Mammary epithelial cell (primary cell): ENCODE measurements at regions of chr11 and their contacts with region 1.

Region 1: GRCh38 chr11:112613051-112613972 is 347.9 kb upstream of the NCAM1 start:
- DNase-seq: peak; percentile 95
- H3K4me3 ChIP-seq: no peak overlapping the region
- H3K27ac ChIP-seq: peak overlapping the region; percentile 67
- H3K4me1 ChIP-seq: peaks cover 57% of the 10 kb centered on the region
- H3K27me3 ChIP-seq: no peaks in the 10 kb centered on the region
- CTCF ChIP-seq: no peak

Region 2: DNA sequence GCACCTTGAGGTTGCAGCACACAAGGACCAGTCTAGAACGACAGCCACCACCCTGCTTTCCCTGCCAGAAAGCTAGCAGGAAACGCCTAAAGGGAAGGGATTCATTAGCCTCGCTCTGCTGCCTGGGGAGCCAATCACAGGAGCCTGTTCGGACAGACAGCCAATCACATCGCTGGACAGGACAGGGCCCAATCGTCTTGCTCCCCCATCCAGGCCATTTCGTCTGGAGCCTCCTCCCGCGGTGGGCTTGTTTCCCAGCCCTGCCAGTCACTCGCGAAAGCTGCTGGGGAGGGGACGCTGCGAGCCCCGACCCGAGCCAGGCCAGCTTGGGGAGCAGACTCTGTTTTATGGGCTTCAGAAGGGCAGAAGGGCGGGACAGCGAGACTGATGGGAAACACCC is 268.1 kb after region 1 on chr11:
- CTCF ChIA-PET with region 1: no interaction called
- dilution Hi-C with region 1: no loop called
- in situ Hi-C with region 1: no loop called
- intact Hi-C with region 1: no loop called
- DNase-seq: peak; percentile 66
- H3K4me3 ChIP-seq: peak overlapping the region in 2 of 3 experiments; percentile 22 to 30
- H3K27ac ChIP-seq: no peak overlapping the region
- H3K4me1 ChIP-seq: no peaks in the 10 kb centered on the region
- H3K27me3 ChIP-seq: no peaks in the 10 kb centered on the region
- CTCF ChIP-seq: no peak

Region 3: GRCh38 chr11:113059548-113059947 is 446.2 kb after region 1 on chr11:
- CTCF ChIA-PET with region 1: no interaction called
- dilution Hi-C with region 1: no loop called
- in situ Hi-C with region 1: no loop called
- intact Hi-C with region 1: no loop called
- DNase-seq: no peak
- H3K4me3 ChIP-seq: no peak overlapping the region
- H3K27ac ChIP-seq: no peak overlapping the region
- H3K4me1 ChIP-seq: no peaks in the 10 kb centered on the region
- H3K27me3 ChIP-seq: peaks cover 2% of the 10 kb centered on the region
- CTCF ChIP-seq: no peak

Region 4: DNA sequence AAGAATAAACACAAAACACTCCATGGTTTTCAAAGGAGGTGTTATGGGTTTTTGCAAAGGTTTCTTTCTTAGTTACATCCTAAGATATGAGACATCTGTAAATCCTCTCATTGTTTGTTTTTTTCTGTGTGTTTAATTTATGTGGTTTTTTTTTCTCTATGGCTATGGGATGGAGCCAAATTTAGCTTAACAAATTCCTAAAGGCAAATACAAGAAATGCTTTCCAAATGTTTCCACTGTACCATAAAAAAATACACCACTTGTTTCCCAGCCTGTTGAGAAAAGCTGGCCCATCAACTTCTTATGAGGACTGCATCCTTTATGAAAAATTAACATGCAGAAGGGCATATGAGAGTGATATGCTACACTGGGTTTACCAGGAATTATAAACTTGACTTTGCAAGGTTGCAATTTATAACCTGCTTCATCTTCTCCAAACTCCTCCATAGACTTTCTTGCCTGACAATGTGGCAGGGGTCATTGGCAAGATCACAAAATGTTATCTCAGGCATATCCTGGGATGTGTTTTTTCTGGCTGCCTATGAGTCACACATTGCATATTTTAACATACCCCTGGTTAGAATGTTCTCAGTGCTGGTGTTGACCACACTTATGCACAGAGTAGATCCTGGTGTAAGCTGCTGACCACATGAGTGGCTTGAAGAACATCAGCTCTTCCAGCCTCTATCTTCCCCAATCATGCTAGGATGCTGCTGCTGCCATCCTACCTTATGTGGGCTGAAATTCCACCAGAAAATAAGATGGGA is 563.5 kb after region 1 on chr11:
- CTCF ChIA-PET with region 1: no interaction called
- dilution Hi-C with region 1: no loop called
- in situ Hi-C with region 1: no loop called
- intact Hi-C with region 1: no loop called
- DNase-seq: peak; percentile 53
- H3K4me3 ChIP-seq: no peak overlapping the region
- H3K27ac ChIP-seq: no peak overlapping the region
- H3K4me1 ChIP-seq: peaks cover 5% of the 10 kb centered on the region
- H3K27me3 ChIP-seq: no peaks in the 10 kb centered on the region
- CTCF ChIP-seq: no peak

Region 5: DNA sequence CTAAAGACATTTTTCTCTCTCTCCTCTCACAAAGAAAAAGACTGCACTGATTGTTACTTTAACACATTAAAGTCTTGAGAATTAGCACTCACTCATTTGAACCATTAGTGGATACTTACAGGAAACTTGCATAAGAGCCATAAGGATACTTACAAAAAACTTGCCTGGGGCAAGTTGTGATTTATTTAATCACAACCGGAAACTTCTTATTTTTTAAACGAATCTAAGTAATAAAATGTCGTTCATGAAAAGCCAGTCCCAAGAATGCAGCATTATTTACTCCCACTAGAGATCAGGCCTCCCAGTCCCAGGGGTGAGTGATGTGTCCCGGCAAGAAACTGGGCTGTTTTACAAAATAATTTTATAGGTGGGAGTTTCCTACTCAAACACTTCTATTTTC is 641.8 kb after region 1 on chr11:
- CTCF ChIA-PET with region 1: interaction called, 10 read pairs
- dilution Hi-C with region 1: no loop called
- in situ Hi-C with region 1: no loop called
- intact Hi-C with region 1: no loop called
- DNase-seq: peak; percentile 27
- H3K4me3 ChIP-seq: no peak overlapping the region
- H3K27ac ChIP-seq: no peak overlapping the region
- H3K4me1 ChIP-seq: peaks cover 8% of the 10 kb centered on the region
- H3K27me3 ChIP-seq: no peaks in the 10 kb centered on the region
- CTCF ChIP-seq: no peak